ENCODE measurements at regions of chr19 and their contacts with region 1.

Region 1: GRCh38 chr19:46265217-46265828 is 31.5 kb upstream of the HIF3A start:
- DNase-seq: peak; percentile 52 to 74
- H3K4me3 ChIP-seq: no peak overlapping the region
- H3K27ac ChIP-seq: no peak overlapping the region
- H3K4me1 ChIP-seq: no peaks in the 10 kb centered on the region
- H3K27me3 ChIP-seq: no peaks in the 10 kb centered on the region
- CTCF ChIP-seq: peak; percentile 83 to 92 (median 88)
- POLR2A ChIP-seq: no peak

Region 2: GRCh38 chr19:46030812-46031550 is 234.3 kb before region 1 on chr19:
- intact Hi-C with region 1: loop called (anchors 2 kb)
- DNase-seq: no peak
- H3K4me3 ChIP-seq: no peak overlapping the region
- H3K27ac ChIP-seq: no peak overlapping the region
- H3K4me1 ChIP-seq: no peaks in the 10 kb centered on the region
- H3K27me3 ChIP-seq: no peaks in the 10 kb centered on the region
- CTCF ChIP-seq: no peak
- POLR2A ChIP-seq: no peak

Region 3: DNA sequence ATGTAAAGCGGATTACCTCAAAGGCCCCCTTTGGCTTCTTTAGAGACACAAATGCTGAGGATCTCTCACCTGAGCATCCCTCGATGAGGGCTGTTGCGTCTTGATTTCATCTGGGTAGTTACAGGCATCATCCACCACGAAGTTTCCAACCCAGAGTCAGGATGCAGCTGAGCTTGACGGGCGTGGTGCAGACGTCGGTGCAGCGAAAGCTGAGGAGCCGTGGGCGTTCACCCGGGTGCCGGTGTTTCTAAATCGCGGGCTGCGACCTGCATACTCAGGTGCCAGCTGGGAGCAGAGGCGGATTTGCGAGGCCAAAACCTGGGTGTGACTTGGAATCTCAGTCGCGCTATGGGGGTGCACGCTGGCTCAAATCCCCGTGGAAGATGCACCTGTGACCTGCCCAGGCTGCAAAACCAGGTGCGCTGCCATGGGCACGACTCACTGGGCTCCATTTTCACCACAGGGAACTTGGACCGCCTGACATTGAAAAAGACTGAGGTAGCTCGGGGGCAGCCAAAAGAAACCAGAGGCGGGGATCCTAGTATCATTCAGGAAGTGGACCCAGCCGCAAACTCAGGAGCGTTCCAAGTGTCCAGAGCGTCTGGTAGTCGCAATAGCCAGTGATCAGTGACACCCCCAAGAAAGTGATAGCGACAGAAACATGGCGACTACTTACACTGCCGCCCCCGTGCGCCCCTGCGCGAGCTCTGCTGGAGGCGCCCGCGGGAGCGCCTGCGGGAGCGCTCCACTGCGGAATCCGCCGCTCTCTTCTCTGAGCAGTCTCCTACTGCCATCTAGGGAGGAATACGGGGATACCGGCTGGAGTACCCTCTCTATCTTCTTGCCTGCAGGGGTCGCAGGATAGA is 188.1 kb before region 1 on chr19:
- intact Hi-C with region 1: loop called (anchors 5 kb)
- DNase-seq: peak; percentile 42 to 58
- H3K4me3 ChIP-seq: no peak overlapping the region
- H3K27ac ChIP-seq: no peak overlapping the region
- H3K4me1 ChIP-seq: no peaks in the 10 kb centered on the region
- H3K27me3 ChIP-seq: peaks cover 0 to 29% of the 10 kb centered on the region in 2 donors
- CTCF ChIP-seq: peak; percentile 50 to 67 (median 60)
- POLR2A ChIP-seq: no peak

Region 4: GRCh38 chr19:46283771-46284170 is 18.4 kb after region 1 on chr19:
- intact Hi-C with region 1: no loop called
- DNase-seq: peak in 1 of 2 donors; percentile 59
- H3K4me3 ChIP-seq: no peak overlapping the region
- H3K27ac ChIP-seq: peak overlapping the region; percentile 10 to 49
- H3K4me1 ChIP-seq: no peaks in the 10 kb centered on the region
- H3K27me3 ChIP-seq: no peaks in the 10 kb centered on the region
- CTCF ChIP-seq: no peak
- POLR2A ChIP-seq: no peak

Region 5: GRCh38 chr19:46303691-46304397 is 38.5 kb after region 1 on chr19:
- intact Hi-C with region 1: no loop called
- DNase-seq: peak; percentile 56 to 61
- H3K4me3 ChIP-seq: no peak overlapping the region
- H3K27ac ChIP-seq: peak overlapping the region; percentile 30 to 95
- H3K4me1 ChIP-seq: peaks cover 3 to 7% of the 10 kb centered on the region in 2 donors
- H3K27me3 ChIP-seq: no peaks in the 10 kb centered on the region
- CTCF ChIP-seq: no peak
- POLR2A ChIP-seq: no peak

Region 6: DNA sequence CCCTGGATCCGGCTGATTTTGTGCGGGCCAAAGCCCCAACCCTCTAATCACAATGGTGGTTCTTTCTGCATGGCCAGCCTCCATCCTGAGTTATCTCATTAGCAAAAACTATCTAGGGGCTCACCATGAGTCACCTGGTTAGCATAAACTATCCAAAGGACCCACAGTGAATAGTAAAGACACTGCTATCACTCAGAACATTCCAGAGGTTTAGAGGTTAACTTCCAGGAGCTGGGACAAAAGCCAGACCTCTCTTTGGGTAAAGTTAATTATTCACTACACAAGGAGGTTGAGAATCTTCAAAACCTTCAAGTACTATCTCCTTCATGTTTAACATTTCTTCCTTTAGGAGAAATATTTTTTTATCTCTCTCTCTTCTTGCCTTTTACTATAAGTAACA is 62.8 kb after region 1 on chr19:
- intact Hi-C with region 1: no loop called
- DNase-seq: no peak
- H3K4me3 ChIP-seq: no peak overlapping the region
- H3K27ac ChIP-seq: no peak overlapping the region
- H3K4me1 ChIP-seq: no peaks in the 10 kb centered on the region
- H3K27me3 ChIP-seq: no peaks in the 10 kb centered on the region
- CTCF ChIP-seq: no peak
- POLR2A ChIP-seq: no peak

Measured in uterus (tissue), 4 donors.